Ascending aorta (tissue), 2 donors: ENCODE measurements at regions of chr6 and their contacts with region 1.

Region 1: GRCh38 chr6:125421853-125422252 is 120.1 kb upstream of the HDDC2 start:
- DNase-seq: peak; percentile 11 to 79
- H3K4me3 ChIP-seq: peak overlapping the region; percentile 34
- H3K27ac ChIP-seq: peak overlapping the region; percentile 42 to 68
- H3K4me1 ChIP-seq: peaks cover 0 to 9% of the 10 kb centered on the region in 2 donors
- H3K27me3 ChIP-seq: no peaks in the 10 kb centered on the region
- CTCF ChIP-seq: no peak

Region 2: DNA sequence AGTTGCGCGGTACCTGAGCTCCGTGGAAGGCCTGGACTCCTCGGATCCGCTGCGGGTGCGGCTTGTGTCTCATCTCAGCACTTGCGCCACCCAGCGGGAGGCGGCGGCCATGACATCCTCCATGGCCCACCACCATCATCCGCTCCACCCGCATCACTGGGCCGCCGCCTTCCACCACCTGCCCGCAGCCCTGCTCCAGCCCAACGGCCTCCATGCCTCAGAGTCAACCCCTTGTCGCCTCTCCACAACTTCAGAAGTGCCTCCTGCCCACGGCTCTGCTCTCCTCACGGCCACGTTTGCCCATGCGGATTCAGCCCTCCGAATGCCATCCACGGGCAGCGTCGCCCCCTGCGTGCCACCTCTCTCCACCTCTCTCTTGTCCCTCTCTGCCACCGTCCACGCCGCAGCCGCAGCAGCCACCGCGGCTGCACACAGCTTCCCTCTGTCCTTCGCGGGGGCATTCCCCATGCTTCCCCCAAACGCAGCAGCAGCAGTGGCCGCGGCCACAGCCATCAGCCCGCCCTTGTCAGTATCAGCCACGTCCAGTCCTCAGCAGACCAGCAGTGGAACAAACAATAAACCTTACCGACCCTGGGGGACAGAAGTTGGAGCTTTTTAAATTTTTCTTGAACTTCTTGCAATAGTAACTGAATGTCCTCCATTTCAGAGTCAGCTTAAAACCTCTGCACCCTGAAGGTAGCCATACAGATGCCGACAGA is 337.5 kb after region 1 on chr6:
- intact Hi-C with region 1: loop called (anchors 5 kb)
- DNase-seq: peak in 1 of 2 donors; percentile 75
- H3K4me3 ChIP-seq: peak overlapping the region; percentile 4 to 50
- H3K27ac ChIP-seq: peak overlapping the region; percentile 95 to 96
- H3K4me1 ChIP-seq: peaks cover 13 to 68% of the 10 kb centered on the region in 2 donors
- H3K27me3 ChIP-seq: no peaks in the 10 kb centered on the region
- CTCF ChIP-seq: peak; percentile 10 to 40 (median 32)